ENCODE measurements at regions of chr16 and their contacts with region 1.

Region 1: DNA sequence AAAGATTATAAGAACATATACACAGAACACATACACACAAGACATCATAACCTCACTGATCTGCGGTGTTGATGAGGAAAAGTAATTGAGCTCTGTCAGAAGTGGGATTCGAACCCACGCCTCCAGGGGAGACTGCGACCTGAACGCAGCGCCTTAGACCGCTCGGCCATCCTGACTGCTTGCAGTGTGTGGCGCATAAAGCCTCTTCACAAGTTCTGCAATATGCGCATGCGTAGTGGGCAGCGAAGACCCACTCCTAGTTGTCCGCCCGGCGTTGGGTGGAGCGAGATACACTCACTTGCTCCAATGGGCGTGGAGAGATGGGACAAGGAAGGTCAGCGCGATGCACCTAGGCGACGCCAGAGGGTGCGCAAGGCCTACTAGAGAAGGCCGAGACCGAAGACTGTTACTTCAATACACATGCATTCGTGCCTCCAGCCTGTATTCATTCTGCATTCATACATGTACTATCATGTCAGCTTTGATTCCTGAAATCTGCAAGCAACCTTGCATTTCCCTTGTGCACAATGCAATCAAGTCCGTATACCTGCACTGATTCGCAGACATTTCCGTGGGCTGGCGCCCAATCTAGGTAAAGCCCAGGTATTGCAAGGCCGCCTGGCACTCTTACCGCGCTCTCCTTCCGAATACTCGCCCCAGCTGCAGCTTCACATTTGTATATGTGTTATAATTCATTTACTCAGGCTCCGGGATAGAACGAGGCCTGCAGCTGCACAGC is 16.1 kb upstream of the PLLP start:
- DNase-seq: peak; percentile 100
- ATAC-seq: peak; percentile 92
- H3K4me3 Mint-ChIP-seq: no peak overlapping the region
- H3K27ac Mint-ChIP-seq: no peak overlapping the region
- H3K4me1 Mint-ChIP-seq: peaks cover 32% of the 10 kb centered on the region
- H3K27me3 Mint-ChIP-seq: no peaks in the 10 kb centered on the region
- CTCF ChIP-seq: peak; percentile 75

Region 2: GRCh38 chr16:57185944-57186871 is 114.3 kb before region 1 on chr16 and contains the starts of genes PSME3IP1 and RSPRY1:
- CTCF ChIA-PET with region 1: no interaction called
- POLR2A ChIA-PET with region 1: interaction called, 7 read pairs
- intact Hi-C with region 1: loop called (anchors 1 kb)
- DNase-seq: peak; percentile 89
- ATAC-seq: peak; percentile 91
- H3K4me3 Mint-ChIP-seq: peak within 1 kb of the TSS; percentile 92
- H3K27ac Mint-ChIP-seq: peak within 1 kb of the TSS; percentile 95
- H3K4me1 Mint-ChIP-seq: peaks cover 57% of the 10 kb centered on the region
- H3K27me3 Mint-ChIP-seq: no peaks in the 10 kb centered on the region
- CTCF ChIP-seq: no peak
- total RNA-seq, gene PSME3IP1: 131 and 147 TPM in 2 replicates
- total RNA-seq, gene RSPRY1: 32.6 and 39.9 TPM in 2 replicates

Region 3: GRCh38 chr16:57349212-57350031 is 48.9 kb after region 1 on chr16:
- CTCF ChIA-PET with region 1: interaction called, 4 read pairs
- POLR2A ChIA-PET with region 1: interaction called, 18 read pairs
- intact Hi-C with region 1: loop called (anchors 1 kb)
- DNase-seq: peak; percentile 51
- ATAC-seq: peak; percentile 99
- H3K4me3 Mint-ChIP-seq: peak overlapping the region; percentile 62
- H3K27ac Mint-ChIP-seq: peak overlapping the region; percentile 31
- H3K4me1 Mint-ChIP-seq: peaks cover 43% of the 10 kb centered on the region
- H3K27me3 Mint-ChIP-seq: peaks cover 8% of the 10 kb centered on the region
- CTCF ChIP-seq: no peak

Region 4: GRCh38 chr16:57413301-57413730 is 112.8 kb after region 1 on chr16:
- CTCF ChIA-PET with region 1: interaction called, 215 read pairs
- POLR2A ChIA-PET with region 1: interaction called, 63 read pairs
- intact Hi-C with region 1: loop called (anchors 1 kb)
- DNase-seq: peak; percentile 52
- ATAC-seq: peak; percentile 89
- H3K4me3 Mint-ChIP-seq: peak overlapping the region; percentile 69
- H3K27ac Mint-ChIP-seq: peak overlapping the region; percentile 81
- H3K4me1 Mint-ChIP-seq: peaks cover 68% of the 10 kb centered on the region
- H3K27me3 Mint-ChIP-seq: no peaks in the 10 kb centered on the region
- CTCF ChIP-seq: no peak

Region 5: GRCh38 chr16:57519796-57520360 is 219.3 kb after region 1 on chr16:
- CTCF ChIA-PET with region 1: interaction called, 4 read pairs
- POLR2A ChIA-PET with region 1: interaction called, 6 read pairs
- intact Hi-C with region 1: loop called (anchors 1 kb)
- DNase-seq: peak; percentile 68
- ATAC-seq: peak; percentile 80
- H3K4me3 Mint-ChIP-seq: no peak overlapping the region
- H3K27ac Mint-ChIP-seq: no peak overlapping the region
- H3K4me1 Mint-ChIP-seq: peaks cover 40% of the 10 kb centered on the region
- H3K27me3 Mint-ChIP-seq: no peaks in the 10 kb centered on the region
- CTCF ChIP-seq: peak; percentile 96

Region 6: DNA sequence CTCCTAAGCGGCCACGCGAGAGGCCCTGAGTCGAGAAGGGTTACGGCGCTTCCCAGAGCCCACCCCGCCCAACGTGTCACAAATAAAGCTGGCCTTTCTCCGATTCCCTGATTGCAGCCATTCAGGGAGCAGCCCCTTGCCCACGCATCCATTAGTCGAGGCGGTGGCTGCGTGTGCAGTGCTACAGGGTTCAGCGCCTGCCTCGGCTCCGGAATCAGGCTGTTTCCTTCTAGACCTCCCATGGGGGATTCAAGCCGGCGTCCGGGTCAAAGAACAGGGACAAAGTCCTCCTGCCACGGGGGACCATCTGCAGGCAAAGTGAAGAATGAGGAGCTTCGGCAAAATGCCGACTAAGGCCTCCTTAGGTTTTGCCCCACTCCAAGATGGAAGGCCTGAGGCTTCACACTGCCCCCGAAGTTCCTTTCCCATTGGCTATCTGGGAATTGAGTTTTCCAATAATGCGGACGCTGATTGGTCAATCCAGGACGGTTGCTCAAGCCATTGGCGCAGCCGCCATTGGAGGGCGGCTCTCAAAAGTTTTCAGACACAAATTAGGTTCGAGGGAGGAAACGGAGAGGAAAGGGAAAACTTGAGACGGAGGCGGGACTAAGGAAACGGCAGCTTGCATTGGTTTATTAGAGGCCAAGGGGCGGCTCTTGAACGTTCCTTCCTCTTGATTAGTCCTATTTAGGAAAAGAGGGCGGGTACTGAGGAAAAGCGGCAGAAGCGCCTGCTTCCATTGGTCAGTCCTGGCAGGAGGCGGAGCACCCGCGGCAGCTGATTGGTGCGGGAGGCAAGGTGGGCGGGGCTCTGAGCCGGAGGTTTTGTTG is 434.6 kb after region 1 on chr16:
- CTCF ChIA-PET with region 1: no interaction called
- POLR2A ChIA-PET with region 1: no interaction called
- intact Hi-C with region 1: loop called (anchors 2 kb)
- DNase-seq: peak; percentile 94
- ATAC-seq: peak; percentile 93
- H3K4me3 Mint-ChIP-seq: peak overlapping the region; percentile 95
- H3K27ac Mint-ChIP-seq: peak overlapping the region; percentile 98
- H3K4me1 Mint-ChIP-seq: peaks cover 30% of the 10 kb centered on the region
- H3K27me3 Mint-ChIP-seq: no peaks in the 10 kb centered on the region
- CTCF ChIP-seq: no peak

Region 7: GRCh38 chr16:58789351-58789750 is 1488.8 kb after region 1 on chr16:
- CTCF ChIA-PET with region 1: no interaction called
- POLR2A ChIA-PET with region 1: no interaction called
- intact Hi-C with region 1: no loop called
- DNase-seq: no peak
- ATAC-seq: no peak
- H3K4me3 Mint-ChIP-seq: no peak overlapping the region
- H3K27ac Mint-ChIP-seq: no peak overlapping the region
- H3K4me1 Mint-ChIP-seq: no peaks in the 10 kb centered on the region
- H3K27me3 Mint-ChIP-seq: peaks cover 10% of the 10 kb centered on the region
- CTCF ChIP-seq: no peak

Measured in activated B cell treated with CpG ODN at 0.5 μM for 24 hours (primary cell).